Activated CD8-positive, alpha-beta T cell treated with anti-CD3 and anti-CD28 coated beads for 36 hours (primary cell): ENCODE measurements at regions of chr7 and their contacts with region 1.

Region 1: GRCh38 chr7:101077303-101078089 is 7.8 kb upstream of the TRIM56 start:
- DNase-seq: peak; percentile 92
- ATAC-seq: peak; percentile 99
- H3K4me3 Mint-ChIP-seq: no peak overlapping the region
- H3K27ac Mint-ChIP-seq: no peak overlapping the region
- H3K4me1 Mint-ChIP-seq: peaks cover 7% of the 10 kb centered on the region
- H3K27me3 Mint-ChIP-seq: no peaks in the 10 kb centered on the region
- CTCF ChIP-seq: peak; percentile 86

Region 2: DNA sequence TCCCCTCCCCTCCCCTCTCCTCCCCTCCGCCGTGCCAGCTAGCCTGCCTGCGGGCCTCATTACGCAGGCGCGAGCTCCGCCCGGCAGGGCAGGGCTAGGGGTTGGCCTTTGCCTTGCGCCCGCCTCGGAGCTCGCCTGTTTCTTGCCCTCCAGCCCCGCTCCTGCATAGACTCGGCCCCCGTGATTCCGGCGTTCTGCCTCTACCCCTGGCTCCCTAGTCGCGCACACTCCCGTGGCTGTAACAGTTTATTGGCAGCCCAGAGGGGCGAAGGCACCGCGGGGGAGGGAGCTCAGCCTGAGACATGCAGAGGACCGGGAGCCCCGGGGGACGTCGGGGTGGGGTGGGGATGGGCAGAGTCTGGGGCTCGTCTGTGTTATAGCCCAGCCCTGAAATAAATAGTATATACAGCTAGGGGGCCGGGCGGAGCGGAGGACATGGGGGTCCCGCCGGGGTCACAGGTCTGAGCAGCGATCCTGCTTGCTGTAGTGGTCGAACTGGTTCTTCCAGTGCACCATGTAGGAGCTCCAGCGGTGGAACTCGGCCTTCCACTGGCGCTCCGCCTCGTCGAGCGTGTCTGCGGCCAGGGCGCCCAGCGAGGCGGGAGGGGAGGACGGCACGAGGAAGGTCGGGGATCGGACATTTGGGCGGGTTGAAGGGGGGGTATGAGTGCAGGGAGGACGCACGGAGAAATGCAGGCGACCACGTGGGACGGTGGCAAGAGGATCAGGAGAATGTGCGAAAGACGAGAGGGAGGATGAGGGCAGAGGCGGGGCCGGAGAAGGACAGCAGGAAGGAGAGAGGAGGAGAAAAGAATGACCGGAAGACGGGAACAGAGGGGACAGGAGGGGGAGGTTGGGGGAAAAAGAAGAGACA is 187.5 kb before region 1 on chr7:
- CTCF ChIA-PET with region 1: interaction called, 10 read pairs
- POLR2A ChIA-PET with region 1: no interaction called
- intact Hi-C with region 1: loop called (anchors 5 kb)
- DNase-seq: peak; percentile 92
- ATAC-seq: peak; percentile 92
- H3K4me3 Mint-ChIP-seq: peak overlapping the region; percentile 73
- H3K27ac Mint-ChIP-seq: peak overlapping the region; percentile 75
- H3K4me1 Mint-ChIP-seq: peaks cover 37% of the 10 kb centered on the region
- H3K27me3 Mint-ChIP-seq: peaks cover 26% of the 10 kb centered on the region
- CTCF ChIP-seq: no peak

Region 3: DNA sequence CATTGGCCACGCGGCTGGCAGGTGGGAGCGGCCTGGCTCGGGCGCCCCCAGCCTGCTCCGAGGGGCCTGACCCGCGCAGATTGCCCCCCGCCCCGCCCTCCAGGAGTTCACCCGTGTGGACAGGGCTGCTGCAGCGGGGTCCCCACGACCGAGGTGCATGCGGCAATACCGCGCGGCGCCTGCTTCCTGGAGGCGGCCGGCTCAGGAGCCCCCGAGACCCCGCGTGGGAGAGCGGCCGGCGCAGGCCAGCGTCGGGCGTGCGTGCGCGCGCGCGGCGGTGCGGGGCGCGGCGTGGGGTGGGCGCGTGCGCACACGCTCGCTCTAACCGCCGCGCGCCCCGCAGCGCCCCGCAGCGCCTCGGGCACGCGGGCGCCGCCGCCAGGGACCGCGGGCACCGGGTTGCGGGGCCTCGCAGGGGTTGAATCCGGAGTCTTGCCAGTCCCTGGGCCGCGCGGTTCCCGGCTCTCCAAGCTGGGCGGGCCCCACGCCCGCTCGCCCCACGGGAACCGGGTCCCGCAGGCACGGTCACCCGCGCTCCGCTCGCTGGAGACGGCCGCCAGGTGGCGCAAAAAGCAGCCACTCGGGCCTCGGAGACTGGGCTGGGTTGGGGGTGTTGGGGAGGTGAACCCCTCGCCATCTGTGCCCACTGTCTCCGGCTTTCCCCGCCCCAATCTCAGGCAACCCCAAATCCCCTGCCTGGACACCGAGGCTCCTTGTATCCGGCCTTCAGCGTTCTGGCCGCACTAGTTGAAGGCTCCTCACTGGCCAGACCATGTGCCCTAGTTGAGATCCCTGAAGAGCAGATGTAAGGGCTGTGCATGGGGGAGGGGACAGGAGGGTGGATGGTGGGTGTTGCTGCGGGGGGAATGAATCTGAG is 180.5 kb before region 1 on chr7:
- CTCF ChIA-PET with region 1: interaction called, 10 read pairs
- POLR2A ChIA-PET with region 1: no interaction called
- intact Hi-C with region 1: loop called (anchors 5 kb)
- DNase-seq: peak; percentile 62
- ATAC-seq: peak; percentile 55
- H3K4me3 Mint-ChIP-seq: peak overlapping the region; percentile 8
- H3K27ac Mint-ChIP-seq: no peak overlapping the region
- H3K4me1 Mint-ChIP-seq: peaks cover 7% of the 10 kb centered on the region
- H3K27me3 Mint-ChIP-seq: peaks cover 43% of the 10 kb centered on the region
- CTCF ChIP-seq: peak; percentile 74

Region 4: GRCh38 chr7:101058355-101058754 is 19.1 kb before region 1 on chr7:
- CTCF ChIA-PET with region 1: interaction called, 14 read pairs
- POLR2A ChIA-PET with region 1: no interaction called
- intact Hi-C with region 1: no loop called
- DNase-seq: peak; percentile 61
- ATAC-seq: no peak
- H3K4me3 Mint-ChIP-seq: no peak overlapping the region
- H3K27ac Mint-ChIP-seq: no peak overlapping the region
- H3K4me1 Mint-ChIP-seq: peaks cover 5% of the 10 kb centered on the region
- H3K27me3 Mint-ChIP-seq: peaks cover 30% of the 10 kb centered on the region
- CTCF ChIP-seq: no peak

Region 5: GRCh38 chr7:101094416-101095375 is 17.2 kb after region 1 on chr7:
- CTCF ChIA-PET with region 1: interaction called, 12 read pairs
- POLR2A ChIA-PET with region 1: no interaction called
- intact Hi-C with region 1: no loop called
- DNase-seq: peak; percentile 53
- ATAC-seq: no peak
- H3K4me3 Mint-ChIP-seq: no peak overlapping the region
- H3K27ac Mint-ChIP-seq: no peak overlapping the region
- H3K4me1 Mint-ChIP-seq: peaks cover 18% of the 10 kb centered on the region
- H3K27me3 Mint-ChIP-seq: no peaks in the 10 kb centered on the region
- CTCF ChIP-seq: peak; percentile 73